Thyroid gland (tissue), 4 donors: ENCODE measurements at regions of chr16 and their contacts with region 1.

Region 1: DNA sequence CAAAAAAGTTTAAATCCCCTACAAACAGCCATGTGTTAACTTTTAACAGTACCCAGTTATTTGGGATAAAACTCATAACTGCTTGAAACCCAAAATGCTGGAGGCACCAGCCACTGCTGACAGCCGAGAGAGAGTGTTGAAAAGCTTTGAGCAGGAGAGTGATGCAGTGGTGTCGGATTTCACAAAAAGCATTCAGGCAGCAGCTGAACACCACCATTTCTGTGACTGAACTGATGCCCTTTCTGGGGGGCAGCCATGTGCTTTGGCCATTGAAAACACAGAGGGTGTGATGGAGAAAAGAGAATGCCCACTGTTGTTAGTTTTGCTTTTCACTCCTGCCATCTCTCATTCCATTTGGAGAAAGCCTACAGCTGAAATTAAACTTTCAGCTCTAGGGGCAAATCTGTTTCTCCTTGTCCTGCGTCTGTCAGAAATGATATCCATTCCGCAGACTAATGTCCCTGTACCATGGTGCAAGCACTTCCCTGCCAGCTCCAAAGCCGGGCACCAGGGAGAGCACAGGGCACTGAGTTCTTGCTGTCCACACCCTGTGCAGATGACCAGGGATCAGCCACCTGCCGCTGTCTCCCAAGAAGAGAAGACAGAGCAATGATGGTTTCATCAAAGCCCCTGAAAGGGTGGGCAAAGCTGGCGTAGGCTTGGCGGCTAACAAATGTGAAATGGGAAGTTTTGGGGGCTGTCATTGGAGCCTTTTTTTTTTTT is 16.6 kb upstream of the MLYCD start:
- DNase-seq: no peak
- H3K4me3 ChIP-seq: no peak overlapping the region
- H3K27ac ChIP-seq: no peak overlapping the region
- H3K4me1 ChIP-seq: no peaks in the 10 kb centered on the region
- H3K27me3 ChIP-seq: no peaks in the 10 kb centered on the region
- CTCF ChIP-seq: no peak
- POLR2A ChIP-seq: no peak

Region 2: GRCh38 chr16:83365166-83365565 is 517.2 kb before region 1 on chr16:
- intact Hi-C with region 1: no loop called
- DNase-seq: no peak
- H3K4me3 ChIP-seq: no peak overlapping the region
- H3K27ac ChIP-seq: no peak overlapping the region
- H3K4me1 ChIP-seq: no peaks in the 10 kb centered on the region
- H3K27me3 ChIP-seq: no peaks in the 10 kb centered on the region
- CTCF ChIP-seq: no peak
- POLR2A ChIP-seq: no peak

Region 3: DNA sequence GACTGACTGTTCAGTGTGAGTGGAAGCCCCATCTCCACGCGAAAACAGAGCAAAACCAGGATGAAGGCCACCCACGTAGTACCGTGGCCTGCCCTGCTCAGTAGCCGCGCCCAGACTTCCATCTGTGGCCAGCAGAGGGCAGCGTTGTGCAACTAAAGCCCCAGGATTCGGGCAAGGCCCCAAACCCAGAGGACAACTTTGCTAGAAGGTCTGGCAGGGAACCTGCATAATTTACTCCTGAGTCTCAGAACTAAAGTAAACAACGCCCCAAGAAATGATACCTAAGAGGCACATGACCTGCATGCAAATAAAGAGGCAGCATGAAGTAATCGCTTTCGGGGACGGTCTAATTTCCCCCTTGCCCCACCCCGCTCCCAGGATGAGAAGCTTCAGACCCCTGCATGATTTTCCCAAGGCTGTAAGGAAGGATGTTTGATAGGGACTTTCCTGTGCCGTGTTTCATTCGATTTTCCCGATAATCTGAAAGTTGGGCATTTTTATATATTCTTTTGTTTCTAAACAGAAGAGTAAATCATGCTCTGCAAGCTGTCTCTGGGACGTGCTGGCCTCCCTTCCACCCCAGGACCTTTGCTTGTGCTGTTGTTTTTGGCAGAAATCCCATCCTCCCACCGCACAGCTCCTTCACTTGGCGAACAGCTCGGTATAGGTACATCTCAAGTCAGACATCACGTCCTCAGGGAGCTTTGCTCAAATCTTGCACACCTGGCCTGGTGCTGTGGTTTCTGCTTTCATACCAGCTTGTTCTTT is 56.0 kb before region 1 on chr16:
- intact Hi-C with region 1: loop called (anchors 5 kb)
- DNase-seq: peak; percentile 85 to 89
- H3K4me3 ChIP-seq: no peak overlapping the region
- H3K27ac ChIP-seq: no peak overlapping the region
- H3K4me1 ChIP-seq: no peaks in the 10 kb centered on the region
- H3K27me3 ChIP-seq: no peaks in the 10 kb centered on the region
- CTCF ChIP-seq: peak; percentile 84 to 89 (median 86)
- POLR2A ChIP-seq: no peak

Region 4: DNA sequence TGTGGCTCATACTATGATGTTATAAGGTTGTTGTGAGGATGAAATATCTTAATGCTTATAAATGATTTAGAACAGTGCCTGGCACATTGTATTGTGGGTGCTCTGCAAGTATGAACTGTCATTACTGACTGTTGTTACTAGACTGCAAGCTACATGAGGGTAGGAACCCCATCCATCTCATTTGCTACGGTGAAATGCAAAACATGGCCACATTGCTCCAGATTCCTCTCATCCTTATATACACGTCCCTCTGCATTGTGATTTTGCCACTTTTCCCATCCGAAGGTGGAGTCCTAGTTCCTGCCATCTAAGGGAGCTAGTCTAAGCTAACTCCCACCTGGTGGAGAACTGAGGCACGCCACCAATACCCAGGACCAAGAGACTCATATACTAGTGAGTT is 44.8 kb before region 1 on chr16:
- intact Hi-C with region 1: no loop called
- DNase-seq: no peak
- H3K4me3 ChIP-seq: no peak overlapping the region
- H3K27ac ChIP-seq: no peak overlapping the region
- H3K4me1 ChIP-seq: no peaks in the 10 kb centered on the region
- H3K27me3 ChIP-seq: no peaks in the 10 kb centered on the region
- CTCF ChIP-seq: no peak
- POLR2A ChIP-seq: no peak